ENCODE measurements at regions of chr4 and their contacts with region 1.

Region 1: GRCh38 chr4:142846729-142847596 is 862 bp upstream of the INPP4B start:
- DNase-seq: peak; percentile 33 to 78 (median 70)
- ATAC-seq: peak; percentile 83
- H3K4me3 ChIP-seq: peak overlapping the region; percentile 54 to 87
- H3K4me3 Mint-ChIP-seq: peak overlapping the region; percentile 86
- H3K27ac ChIP-seq: no peak overlapping the region
- H3K27ac Mint-ChIP-seq: no peak overlapping the region
- H3K4me1 ChIP-seq: peaks cover 4% of the 10 kb centered on the region
- H3K4me1 Mint-ChIP-seq: peaks cover 13% of the 10 kb centered on the region
- H3K27me3 ChIP-seq: peaks cover 4 to 12% of the 10 kb centered on the region in 2 experiments
- H3K27me3 Mint-ChIP-seq: peaks cover 36% of the 10 kb centered on the region
- CTCF ChIP-seq: peak; percentile 42

Region 2: GRCh38 chr4:140861359-140862176 is 1985.4 kb before region 1 on chr4:
- CTCF ChIA-PET with region 1: no interaction called
- POLR2A ChIA-PET with region 1: no interaction called
- intact Hi-C with region 1: loop called in 1 of 2 experiments (anchors 2 kb)
- DNase-seq: peak in 6 of 9 experiments; percentile 4 to 63 (median 26)
- ATAC-seq: no peak
- H3K4me3 ChIP-seq: no peak overlapping the region
- H3K4me3 Mint-ChIP-seq: no peak overlapping the region
- H3K27ac ChIP-seq: no peak overlapping the region
- H3K27ac Mint-ChIP-seq: no peak overlapping the region
- H3K4me1 ChIP-seq: no peaks in the 10 kb centered on the region
- H3K4me1 Mint-ChIP-seq: peaks cover 3% of the 10 kb centered on the region
- H3K27me3 ChIP-seq: no peaks in the 10 kb centered on the region
- H3K27me3 Mint-ChIP-seq: peaks cover 2% of the 10 kb centered on the region
- CTCF ChIP-seq: peak; percentile 42

Region 3: GRCh38 chr4:141220655-141221605 is 1626.0 kb before region 1 on chr4 and contains the start of gene ZNF330:
- CTCF ChIA-PET with region 1: no interaction called
- POLR2A ChIA-PET with region 1: no interaction called
- intact Hi-C with region 1: loop called in 1 of 2 experiments (anchors 10 kb)
- DNase-seq: peak; percentile 79 to 95 (median 87)
- ATAC-seq: peak; percentile 91
- H3K4me3 ChIP-seq: peak within 1 kb of the TSS; percentile 88 to 91
- H3K4me3 Mint-ChIP-seq: peak within 1 kb of the TSS; percentile 95
- H3K27ac ChIP-seq: peak within 1 kb of the TSS; percentile 92
- H3K27ac Mint-ChIP-seq: peak within 1 kb of the TSS; percentile 96
- H3K4me1 ChIP-seq: peaks cover 18% of the 10 kb centered on the region
- H3K4me1 Mint-ChIP-seq: peaks cover 48% of the 10 kb centered on the region
- H3K27me3 ChIP-seq: no peaks in the 10 kb centered on the region
- H3K27me3 Mint-ChIP-seq: peaks cover 2% of the 10 kb centered on the region
- CTCF ChIP-seq: no peak
- total RNA-seq, gene ZNF330: 44.1 to 44.9 TPM

Region 4: GRCh38 chr4:142030010-142030409 is 817.0 kb before region 1 on chr4:
- CTCF ChIA-PET with region 1: no interaction called
- POLR2A ChIA-PET with region 1: no interaction called
- intact Hi-C with region 1: loop called in 1 of 2 experiments (anchors 5 kb)
- DNase-seq: no peak
- ATAC-seq: no peak
- H3K4me3 ChIP-seq: no peak overlapping the region
- H3K4me3 Mint-ChIP-seq: no peak overlapping the region
- H3K27ac ChIP-seq: no peak overlapping the region
- H3K27ac Mint-ChIP-seq: peak overlapping the region; percentile 4
- H3K4me1 ChIP-seq: no peaks in the 10 kb centered on the region
- H3K4me1 Mint-ChIP-seq: no peaks in the 10 kb centered on the region
- H3K27me3 ChIP-seq: no peaks in the 10 kb centered on the region
- H3K27me3 Mint-ChIP-seq: no peaks in the 10 kb centered on the region
- CTCF ChIP-seq: no peak

Region 5: DNA sequence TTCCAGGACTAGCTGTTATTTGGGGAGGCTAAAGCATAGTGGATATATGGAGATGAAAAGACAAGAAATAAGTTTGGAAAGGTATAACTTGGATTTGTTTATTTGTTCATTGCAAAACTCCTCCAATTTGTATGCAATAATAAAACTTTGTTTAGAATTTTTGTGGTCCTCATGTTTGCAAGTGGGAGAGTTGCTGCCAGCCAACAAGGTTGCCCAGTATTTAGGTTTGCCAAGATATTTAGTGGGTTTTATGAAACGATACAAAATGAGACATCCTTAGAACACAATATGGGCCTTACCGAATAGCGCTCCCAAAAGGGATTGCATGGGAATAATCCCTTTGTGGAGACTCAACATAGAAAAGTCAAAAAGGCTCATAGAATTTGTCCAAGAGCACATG is 163.0 kb before region 1 on chr4:
- CTCF ChIA-PET with region 1: no interaction called
- POLR2A ChIA-PET with region 1: no interaction called
- intact Hi-C with region 1: no loop called
- DNase-seq: no peak
- ATAC-seq: no peak
- H3K4me3 ChIP-seq: no peak overlapping the region
- H3K4me3 Mint-ChIP-seq: no peak overlapping the region
- H3K27ac ChIP-seq: no peak overlapping the region
- H3K27ac Mint-ChIP-seq: no peak overlapping the region
- H3K4me1 ChIP-seq: no peaks in the 10 kb centered on the region
- H3K4me1 Mint-ChIP-seq: no peaks in the 10 kb centered on the region
- H3K27me3 ChIP-seq: no peaks in the 10 kb centered on the region
- H3K27me3 Mint-ChIP-seq: no peaks in the 10 kb centered on the region
- CTCF ChIP-seq: no peak

Region 6: DNA sequence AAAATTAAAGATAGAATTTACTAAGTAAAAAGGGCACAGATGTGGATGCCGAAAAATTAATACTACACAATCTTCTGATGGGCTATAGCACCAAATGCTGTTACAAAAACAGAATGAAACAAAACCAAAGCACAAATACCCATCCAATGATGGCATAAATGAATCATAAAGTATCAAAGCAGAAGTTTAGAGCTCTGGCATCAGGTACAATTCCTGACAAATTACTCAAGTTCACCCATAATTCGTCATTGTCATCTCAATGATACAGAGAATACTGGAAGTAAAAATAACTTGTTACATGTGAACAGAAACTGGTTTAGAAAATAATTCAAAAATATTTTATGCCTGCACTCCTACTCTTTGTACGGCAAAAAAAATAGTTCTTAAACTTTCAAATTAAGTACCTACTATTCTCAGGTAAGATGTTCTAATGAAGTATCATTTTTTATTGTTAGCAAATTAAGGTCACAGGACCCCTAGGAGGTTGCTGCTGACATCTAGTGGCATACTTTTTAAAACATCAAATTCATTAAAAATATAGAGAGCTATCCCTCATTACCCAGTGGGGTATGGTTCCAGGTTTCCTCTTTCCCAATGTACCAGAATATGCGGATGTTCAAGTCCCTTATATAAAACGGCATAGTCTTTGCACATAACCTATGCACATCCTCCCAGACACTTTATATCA is 127.0 kb before region 1 on chr4:
- CTCF ChIA-PET with region 1: no interaction called
- POLR2A ChIA-PET with region 1: no interaction called
- intact Hi-C with region 1: loop called in 1 of 2 experiments (anchors 10 kb)
- DNase-seq: peak in 2 of 9 experiments; percentile 48 to 56
- ATAC-seq: peak; percentile 49
- H3K4me3 ChIP-seq: no peak overlapping the region
- H3K4me3 Mint-ChIP-seq: no peak overlapping the region
- H3K27ac ChIP-seq: no peak overlapping the region
- H3K27ac Mint-ChIP-seq: no peak overlapping the region
- H3K4me1 ChIP-seq: peaks cover 3% of the 10 kb centered on the region
- H3K4me1 Mint-ChIP-seq: peaks cover 13% of the 10 kb centered on the region
- H3K27me3 ChIP-seq: no peaks in the 10 kb centered on the region
- H3K27me3 Mint-ChIP-seq: no peaks in the 10 kb centered on the region
- CTCF ChIP-seq: peak; percentile 69

Region 7: GRCh38 chr4:142762280-142762679 is 84.7 kb before region 1 on chr4:
- CTCF ChIA-PET with region 1: no interaction called
- POLR2A ChIA-PET with region 1: no interaction called
- intact Hi-C with region 1: no loop called
- DNase-seq: no peak
- ATAC-seq: no peak
- H3K4me3 ChIP-seq: no peak overlapping the region
- H3K4me3 Mint-ChIP-seq: no peak overlapping the region
- H3K27ac ChIP-seq: no peak overlapping the region
- H3K27ac Mint-ChIP-seq: no peak overlapping the region
- H3K4me1 ChIP-seq: no peaks in the 10 kb centered on the region
- H3K4me1 Mint-ChIP-seq: no peaks in the 10 kb centered on the region
- H3K27me3 ChIP-seq: no peaks in the 10 kb centered on the region
- H3K27me3 Mint-ChIP-seq: no peaks in the 10 kb centered on the region
- CTCF ChIP-seq: no peak

Region 8: DNA sequence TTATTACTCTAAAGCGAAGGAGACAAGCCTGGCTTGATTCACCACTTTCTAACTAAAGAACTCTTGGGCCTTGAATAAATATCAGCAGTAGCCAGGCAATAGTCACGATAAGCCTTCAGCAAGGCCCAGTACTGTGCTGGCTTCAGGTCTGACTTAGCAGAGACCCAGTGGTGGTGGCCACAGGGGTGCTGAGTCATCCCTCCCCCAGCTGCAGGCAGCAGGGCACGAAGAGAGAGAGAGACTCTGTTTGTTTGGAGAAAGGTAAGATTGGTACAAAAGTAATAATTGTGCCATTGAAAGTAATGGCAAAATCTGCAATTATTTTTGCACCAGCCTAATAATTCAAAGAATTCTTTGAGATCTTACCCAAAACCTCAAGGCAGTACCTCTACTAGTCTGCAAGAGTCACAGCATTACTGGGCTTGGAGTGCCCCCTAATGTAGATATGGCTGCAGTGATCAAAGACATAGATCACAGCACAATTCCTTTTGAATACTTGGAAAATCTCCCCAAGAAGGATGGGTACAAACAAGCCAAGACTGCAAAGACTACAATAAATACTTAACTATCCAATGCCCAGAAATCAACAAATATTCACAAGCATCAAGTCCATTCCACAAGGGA is 178.2 kb after region 1 on chr4:
- CTCF ChIA-PET with region 1: no interaction called
- POLR2A ChIA-PET with region 1: no interaction called
- intact Hi-C with region 1: no loop called
- DNase-seq: no peak
- ATAC-seq: no peak
- H3K4me3 ChIP-seq: no peak overlapping the region
- H3K4me3 Mint-ChIP-seq: no peak overlapping the region
- H3K27ac ChIP-seq: no peak overlapping the region
- H3K27ac Mint-ChIP-seq: no peak overlapping the region
- H3K4me1 ChIP-seq: no peaks in the 10 kb centered on the region
- H3K4me1 Mint-ChIP-seq: no peaks in the 10 kb centered on the region
- H3K27me3 ChIP-seq: no peaks in the 10 kb centered on the region
- H3K27me3 Mint-ChIP-seq: no peaks in the 10 kb centered on the region
- CTCF ChIP-seq: no peak

Measured in CD8-positive, alpha-beta T cell (primary cell).